Naive thymus-derived CD4-positive, alpha-beta T cell (primary cell): ENCODE measurements at regions of chr1 and their contacts with region 1.

Region 1: DNA sequence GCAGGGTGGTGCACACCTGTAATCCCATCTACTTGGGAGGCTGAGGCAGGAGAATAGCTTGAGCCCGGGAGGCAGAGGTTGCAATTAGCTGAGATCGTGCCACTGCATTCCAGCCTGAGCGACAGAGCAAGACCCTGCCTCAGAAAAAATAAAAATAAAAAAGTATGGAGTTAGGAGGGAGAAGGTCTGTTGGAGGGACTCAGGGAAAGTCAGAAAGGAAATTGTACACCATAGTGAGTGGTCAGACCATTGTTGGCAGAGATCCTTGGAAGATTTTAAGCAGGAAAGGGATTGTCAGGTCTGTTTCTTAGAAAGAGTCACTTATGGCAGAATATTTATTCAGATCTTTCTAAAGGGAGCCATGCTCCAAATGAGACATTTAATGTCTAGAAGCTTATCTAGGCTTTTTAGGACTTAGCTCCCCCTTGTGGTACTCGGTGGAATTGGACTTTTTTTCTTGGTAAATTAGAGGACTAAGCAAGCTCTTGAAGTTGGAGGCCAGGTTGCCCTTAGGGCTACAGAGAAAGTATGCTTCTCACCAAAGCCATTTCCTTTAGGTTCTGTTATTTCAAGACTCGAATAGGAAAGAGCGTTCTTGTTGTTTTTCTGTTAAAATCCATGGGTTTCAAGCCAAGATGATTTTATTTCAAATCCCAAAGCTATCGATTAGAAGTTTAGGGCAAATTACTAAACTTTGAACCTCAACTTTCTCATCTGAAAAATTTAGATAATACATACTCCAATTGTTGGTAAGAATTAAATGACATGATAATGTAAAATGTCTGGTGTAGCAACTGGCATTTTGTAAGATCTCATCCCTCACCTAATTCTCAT is 16.5 kb downstream of the MIA3 start:
- DNase-seq: peak in 8 of 9 donors; percentile 43 to 83 (median 78)
- ATAC-seq: peak; percentile 96
- H3K4me3 ChIP-seq: no peak overlapping the region
- H3K4me3 Mint-ChIP-seq: no peak overlapping the region
- H3K27ac ChIP-seq: no peak overlapping the region
- H3K27ac Mint-ChIP-seq: peak overlapping the region in 6 of 9 donors; percentile 11 to 82 (median 58)
- H3K4me1 ChIP-seq: no peaks in the 10 kb centered on the region
- H3K4me1 Mint-ChIP-seq: peaks cover 7 to 20% (median 11%) of the 10 kb centered on the region in 7 donors
- H3K27me3 ChIP-seq: no peaks in the 10 kb centered on the region
- H3K27me3 Mint-ChIP-seq: no peaks in the 10 kb centered on the region

Region 2: GRCh38 chr1:222095606-222096475 is 538.6 kb before region 1 on chr1:
- CTCF ChIA-PET with region 1: no interaction called
- POLR2A ChIA-PET with region 1: no interaction called
- intact Hi-C with region 1: loop called (anchors 1 to 5 kb)
- DNase-seq: peak; percentile 31 to 71 (median 58)
- ATAC-seq: peak; percentile 85
- H3K4me3 ChIP-seq: no peak overlapping the region
- H3K4me3 Mint-ChIP-seq: no peak overlapping the region
- H3K27ac ChIP-seq: no peak overlapping the region
- H3K27ac Mint-ChIP-seq: no peak overlapping the region
- H3K4me1 ChIP-seq: no peaks in the 10 kb centered on the region
- H3K4me1 Mint-ChIP-seq: no peaks in the 10 kb centered on the region
- H3K27me3 ChIP-seq: no peaks in the 10 kb centered on the region
- H3K27me3 Mint-ChIP-seq: peaks cover 0 to 5% (median 0%) of the 10 kb centered on the region in 5 donors

Region 3: DNA sequence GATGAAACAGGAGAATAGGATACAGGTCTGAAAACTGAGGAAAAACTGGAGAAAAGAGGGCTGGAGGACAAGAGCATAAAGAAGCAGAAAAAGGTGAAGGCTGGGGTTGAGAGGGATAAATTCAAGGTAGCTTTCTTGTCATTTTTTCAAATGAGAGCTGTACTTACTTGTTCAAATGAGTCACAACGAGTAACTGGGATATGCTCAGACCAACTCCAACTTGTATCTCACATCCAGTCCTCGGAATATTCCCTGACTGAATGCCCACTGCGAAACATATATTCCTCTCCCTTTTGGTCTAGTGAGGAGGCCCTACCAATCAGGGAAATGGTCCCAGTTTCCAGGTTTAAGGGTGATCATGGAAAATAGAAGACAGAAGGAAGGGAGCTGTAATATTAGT is 429.9 kb before region 1 on chr1:
- CTCF ChIA-PET with region 1: no interaction called
- POLR2A ChIA-PET with region 1: no interaction called
- intact Hi-C with region 1: no loop called
- DNase-seq: no peak
- ATAC-seq: no peak
- H3K4me3 ChIP-seq: no peak overlapping the region
- H3K4me3 Mint-ChIP-seq: no peak overlapping the region
- H3K27ac ChIP-seq: no peak overlapping the region
- H3K27ac Mint-ChIP-seq: peak overlapping the region in 2 of 9 donors; percentile 30 to 43
- H3K4me1 ChIP-seq: no peaks in the 10 kb centered on the region
- H3K4me1 Mint-ChIP-seq: peaks cover 0 to 4% (median 0%) of the 10 kb centered on the region in 7 donors
- H3K27me3 ChIP-seq: no peaks in the 10 kb centered on the region
- H3K27me3 Mint-ChIP-seq: no peaks in the 10 kb centered on the region

Region 4: DNA sequence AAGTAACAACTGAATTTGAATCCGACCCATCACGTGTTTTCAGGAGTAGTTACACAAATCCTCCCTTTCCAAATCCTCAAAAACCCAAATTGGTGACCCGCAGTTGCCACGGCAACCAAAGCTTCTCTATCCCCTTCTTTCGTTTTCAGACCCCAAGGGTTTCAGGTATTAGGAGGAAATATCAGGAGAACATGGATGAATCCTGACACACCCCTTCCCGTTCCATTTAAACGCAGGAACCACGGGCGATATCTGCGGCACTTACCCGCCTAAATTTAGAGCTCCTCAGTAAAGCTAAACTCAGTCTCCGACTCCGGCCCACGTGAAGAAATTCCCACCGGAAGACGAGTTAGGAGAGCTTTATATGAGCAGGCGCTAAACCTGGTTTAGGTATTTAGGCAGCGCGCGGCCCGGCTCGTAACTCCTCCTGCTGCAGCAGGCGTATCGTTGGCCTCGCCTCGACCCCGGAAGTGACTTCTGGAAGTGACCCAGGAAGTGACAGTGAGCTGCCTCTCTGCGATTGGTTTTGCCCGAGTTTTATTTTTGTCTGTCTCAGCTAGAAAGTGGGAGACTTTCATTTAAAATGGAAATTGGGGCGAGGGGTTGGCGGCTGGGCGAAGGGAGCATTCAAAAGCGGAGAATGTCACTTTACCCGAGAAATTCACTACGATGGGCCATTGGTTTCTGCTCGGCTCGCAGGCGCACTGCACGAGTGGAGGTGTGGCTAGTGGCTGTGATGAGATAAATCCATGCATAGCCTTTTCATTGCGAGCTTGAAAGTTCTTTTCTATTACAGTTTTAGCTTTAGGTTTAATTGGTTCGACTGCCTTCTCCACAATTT is 44.7 kb before region 1 on chr1 and contains the start of gene TAF1A:
- CTCF ChIA-PET with region 1: interaction called, 7 read pairs
- POLR2A ChIA-PET with region 1: interaction called, 7 read pairs
- intact Hi-C with region 1: loop called in 1 of 2 experiments (anchors 1 kb)
- DNase-seq: peak; percentile 53 to 92 (median 87)
- ATAC-seq: peak; percentile 100
- H3K4me3 ChIP-seq: peak within 1 kb of the TSS; percentile 93
- H3K4me3 Mint-ChIP-seq: peak within 1 kb of the TSS; percentile 86 to 99 (median 96)
- H3K27ac ChIP-seq: peak within 1 kb of the TSS; percentile 85
- H3K27ac Mint-ChIP-seq: peak within 1 kb of the TSS; percentile 94 to 99 (median 97)
- H3K4me1 ChIP-seq: peaks cover 6 to 18% of the 10 kb centered on the region in 2 donors
- H3K4me1 Mint-ChIP-seq: peaks cover 21 to 68% (median 57%) of the 10 kb centered on the region in 7 donors
- H3K27me3 ChIP-seq: no peaks in the 10 kb centered on the region
- H3K27me3 Mint-ChIP-seq: peaks cover 0 to 4% (median 0%) of the 10 kb centered on the region in 5 donors
- total RNA-seq, gene TAF1A: 6.5 to 17.9 (median 9.3) TPM

Region 5: GRCh38 chr1:222654849-222655248 is 20.5 kb after region 1 on chr1:
- CTCF ChIA-PET with region 1: interaction called, 4 read pairs
- POLR2A ChIA-PET with region 1: interaction called, 5 read pairs
- intact Hi-C with region 1: loop called in 1 of 2 experiments (anchors 1 kb)
- DNase-seq: peak in 8 of 9 donors; percentile 62 to 89 (median 83)
- ATAC-seq: peak; percentile 99
- H3K4me3 ChIP-seq: peak overlapping the region; percentile 21
- H3K4me3 Mint-ChIP-seq: peak overlapping the region; percentile 38 to 81 (median 70)
- H3K27ac ChIP-seq: peak overlapping the region; percentile 82
- H3K27ac Mint-ChIP-seq: peak overlapping the region; percentile 85 to 96 (median 94)
- H3K4me1 ChIP-seq: peaks cover 25 to 33% of the 10 kb centered on the region in 2 donors
- H3K4me1 Mint-ChIP-seq: peaks cover 34 to 67% (median 60%) of the 10 kb centered on the region in 7 donors
- H3K27me3 ChIP-seq: no peaks in the 10 kb centered on the region
- H3K27me3 Mint-ChIP-seq: no peaks in the 10 kb centered on the region

Region 6: DNA sequence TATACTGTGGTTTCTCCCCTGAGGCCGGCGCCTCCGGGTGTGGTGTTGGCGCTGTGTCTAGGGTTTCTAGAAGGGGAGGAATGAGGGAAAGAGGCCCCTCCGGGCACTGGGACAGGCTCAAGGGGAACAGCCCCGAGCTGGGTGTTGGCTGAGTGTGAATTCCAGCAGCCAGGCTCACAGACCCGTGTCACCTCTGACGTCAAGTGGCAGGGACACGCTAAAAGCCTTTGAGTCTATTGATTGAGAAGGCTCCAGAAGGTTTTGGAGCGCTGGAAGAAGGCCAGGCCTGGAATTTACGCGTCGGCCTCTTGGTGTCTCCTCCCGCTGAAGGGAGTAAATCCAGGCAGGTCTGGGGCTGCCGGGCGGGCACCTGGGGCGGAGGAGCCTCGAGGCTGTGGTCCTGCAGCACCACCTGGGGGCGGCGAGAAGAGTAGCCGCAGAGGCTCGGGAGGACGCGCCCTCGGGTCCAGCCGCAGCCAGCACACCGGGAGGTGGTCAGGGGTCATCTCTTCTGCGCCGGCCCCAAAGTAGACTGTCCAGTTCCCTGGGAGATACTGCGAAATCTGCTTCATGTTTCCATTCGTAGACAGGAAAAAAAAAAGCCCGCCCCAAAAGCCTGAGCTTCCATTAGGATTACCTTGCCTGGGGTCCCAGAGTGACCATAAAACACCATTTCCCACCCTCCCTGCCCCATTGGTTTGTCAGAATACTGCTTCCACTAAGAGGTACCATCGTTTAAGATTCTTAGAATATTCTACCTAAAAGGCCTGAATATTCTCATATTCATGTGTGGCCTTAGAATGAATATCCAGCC is 447.0 kb after region 1 on chr1:
- CTCF ChIA-PET with region 1: no interaction called
- POLR2A ChIA-PET with region 1: no interaction called
- intact Hi-C with region 1: loop called in 1 of 2 experiments (anchors 5 kb)
- DNase-seq: peak; percentile 54 to 79 (median 65)
- ATAC-seq: peak; percentile 90
- H3K4me3 ChIP-seq: peak overlapping the region; percentile 57
- H3K4me3 Mint-ChIP-seq: peak overlapping the region; percentile 34 to 77 (median 58)
- H3K27ac ChIP-seq: peak overlapping the region; percentile 39
- H3K27ac Mint-ChIP-seq: peak overlapping the region in 1 of 9 donors; percentile 51
- H3K4me1 ChIP-seq: no peaks in the 10 kb centered on the region
- H3K4me1 Mint-ChIP-seq: no peaks in the 10 kb centered on the region
- H3K27me3 ChIP-seq: no peaks in the 10 kb centered on the region
- H3K27me3 Mint-ChIP-seq: peaks cover 2 to 9% (median 4%) of the 10 kb centered on the region in 5 donors